GM13977 (cell line): ENCODE measurements at regions of chr19 and their contacts with region 1.

Region 1: GRCh38 chr19:2962045-2962561 is 15.3 kb upstream of the TLE6 start:
- DNase-seq: peak; percentile 76
- CTCF ChIP-seq: peak; percentile 62

Region 2: GRCh38 chr19:3012621-3013260 is 50.6 kb after region 1 on chr19:
- in situ Hi-C with region 1: no loop called
- DNase-seq: no peak
- CTCF ChIP-seq: no peak

Region 3: GRCh38 chr19:3062168-3063102 is 100.3 kb after region 1 on chr19 and contains the start of gene TLE5:
- in situ Hi-C with region 1: no loop called
- DNase-seq: peak; percentile 91
- CTCF ChIP-seq: peak; percentile 6

Region 4: GRCh38 chr19:3108775-3109174 is 146.7 kb after region 1 on chr19:
- in situ Hi-C with region 1: loop called (anchors 10 kb)
- DNase-seq: peak; percentile 84
- CTCF ChIP-seq: peak; percentile 90